Vagina (tissue), 2 donors: ENCODE measurements at regions of chr3 and their contacts with region 1.

Region 1: DNA sequence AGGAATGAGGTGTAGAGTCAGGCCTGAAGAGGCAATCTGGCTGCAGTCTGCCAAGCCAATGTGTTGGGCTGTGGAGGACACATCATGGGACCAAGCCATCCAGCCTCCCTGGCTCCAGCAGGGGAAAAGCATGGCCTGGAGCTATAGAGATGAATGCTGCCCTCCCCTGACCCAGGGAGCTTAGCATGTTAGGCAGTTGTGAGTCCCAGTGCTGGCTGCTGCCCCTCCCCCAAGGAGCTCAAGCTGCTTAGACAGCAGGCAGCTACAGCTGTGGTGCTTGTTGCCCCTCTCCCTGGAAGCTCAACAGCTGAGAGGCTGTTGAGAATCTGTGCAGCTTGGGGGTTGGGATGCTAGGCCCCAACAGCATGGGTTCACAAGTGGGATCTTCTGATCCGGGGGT is 85.6 kb upstream of the DNAJC19 start:
- DNase-seq: no peak
- H3K4me3 ChIP-seq: no peak overlapping the region
- H3K27ac ChIP-seq: no peak overlapping the region
- H3K4me1 ChIP-seq: no peaks in the 10 kb centered on the region
- H3K27me3 ChIP-seq: no peaks in the 10 kb centered on the region
- CTCF ChIP-seq: no peak
- POLR2A ChIP-seq: no peak

Region 2: GRCh38 chr3:180646187-180646790 is 428.8 kb before region 1 on chr3:
- intact Hi-C with region 1: loop called (anchors 5 kb)
- DNase-seq: no peak
- H3K4me3 ChIP-seq: no peak overlapping the region
- H3K27ac ChIP-seq: no peak overlapping the region
- H3K4me1 ChIP-seq: no peaks in the 10 kb centered on the region
- H3K27me3 ChIP-seq: no peaks in the 10 kb centered on the region
- CTCF ChIP-seq: no peak
- POLR2A ChIP-seq: no peak

Region 3: DNA sequence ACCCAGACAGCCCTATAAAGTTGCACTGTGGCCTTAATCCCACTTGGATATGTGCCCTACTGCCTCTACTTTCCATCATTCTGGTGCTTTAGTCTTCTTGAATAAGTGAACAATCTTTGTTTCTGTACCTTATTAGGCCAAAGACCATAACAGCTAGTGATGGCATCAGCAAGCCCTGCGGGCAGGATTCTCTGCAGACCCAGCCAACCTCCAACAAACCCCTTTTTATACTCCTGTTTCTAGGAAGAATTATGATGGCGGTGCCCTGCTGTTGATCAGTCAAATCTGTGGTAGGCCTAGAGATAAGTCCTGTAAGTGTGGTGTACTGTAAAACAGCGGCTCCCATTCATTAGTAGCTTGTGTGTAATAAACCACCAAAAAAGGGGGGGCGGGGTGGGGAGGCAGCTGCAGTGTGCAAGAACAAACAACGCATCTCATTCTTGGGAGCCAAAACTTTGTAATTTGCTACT is 677.1 kb after region 1 on chr3:
- intact Hi-C with region 1: no loop called
- DNase-seq: no peak
- H3K4me3 ChIP-seq: no peak overlapping the region
- H3K27ac ChIP-seq: no peak overlapping the region
- H3K4me1 ChIP-seq: no peaks in the 10 kb centered on the region
- H3K27me3 ChIP-seq: no peaks in the 10 kb centered on the region
- CTCF ChIP-seq: no peak
- POLR2A ChIP-seq: no peak